ENCODE measurements at regions of chr12 and their contacts with region 1.

Region 1: DNA sequence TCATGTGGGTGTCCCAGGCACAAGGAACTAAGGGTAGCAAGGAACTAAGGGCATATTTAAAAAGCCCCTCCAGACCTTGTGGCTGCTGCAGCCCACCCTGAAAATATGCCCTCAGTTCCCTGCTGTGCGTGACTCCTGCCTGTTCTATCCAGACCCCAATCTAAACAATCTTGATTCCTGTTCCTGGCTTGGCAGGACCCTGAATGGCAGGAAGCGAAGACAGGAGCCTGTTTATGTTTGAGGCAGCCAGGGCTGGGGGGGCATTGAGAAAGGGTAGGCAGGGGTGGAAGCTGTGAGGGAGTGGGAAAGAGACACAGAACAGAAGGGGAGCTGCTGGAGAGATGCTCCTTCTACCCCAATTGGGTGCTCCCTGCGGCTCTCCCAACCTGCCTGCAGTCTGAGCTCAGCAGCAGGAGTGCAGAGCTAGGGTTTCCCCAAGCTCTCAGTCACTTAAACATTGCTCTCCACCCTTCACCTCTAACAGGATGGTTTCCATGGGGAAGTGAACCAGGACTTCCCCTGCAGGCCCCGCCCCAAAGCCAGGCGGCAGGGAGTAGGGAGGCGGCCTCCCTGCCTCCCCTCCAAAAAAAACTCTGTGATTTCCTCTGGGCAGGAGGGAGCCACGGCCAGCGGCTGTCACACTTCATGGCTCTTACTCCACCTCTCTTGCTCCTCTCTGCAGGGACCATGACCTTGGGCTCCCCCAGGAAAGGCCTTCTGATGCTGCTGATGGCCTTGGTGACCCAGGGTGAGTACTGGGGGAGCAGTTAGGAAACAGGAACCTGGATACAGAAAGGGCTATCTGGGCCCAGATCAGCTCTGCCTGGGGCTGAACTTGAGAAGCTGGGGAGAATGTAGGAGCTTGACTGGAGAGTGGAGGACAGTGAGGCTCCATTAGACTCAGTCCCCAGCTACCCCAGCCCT is 4.7 kb downstream of the ACVRL1 start:
- DNase-seq: no peak
- ATAC-seq: peak; percentile 83
- H3K4me3 ChIP-seq: peak overlapping the region; percentile 16 to 19; a peak in 3 of 4 replicates
- H3K27ac ChIP-seq: no peak overlapping the region; the same call in 1 of the 2 replicates
- H3K4me1 ChIP-seq: peaks cover 8 to 21% of the 10 kb centered on the region in 2 experiments
- H3K27me3 ChIP-seq: no peaks in the 10 kb centered on the region
- CTCF ChIP-seq: no peak
- POLR2A ChIP-seq: no peak
- RAD21 ChIP-seq: no peak

Region 2: GRCh38 chr12:51897181-51897580 is 14.9 kb before region 1 on chr12:
- CTCF ChIA-PET with region 1: interaction called, 22 read pairs
- POLR2A ChIA-PET with region 1: no interaction called
- RAD21 ChIA-PET with region 1: no interaction called
- intact Hi-C with region 1: no loop called
- DNase-seq: no peak
- ATAC-seq: no peak
- H3K4me3 ChIP-seq: no peak overlapping the region
- H3K27ac ChIP-seq: no peak overlapping the region
- H3K4me1 ChIP-seq: peaks cover 0 to 8% of the 10 kb centered on the region in 2 experiments; a peak in 2 of 4 replicates
- H3K27me3 ChIP-seq: no peaks in the 10 kb centered on the region
- CTCF ChIP-seq: no peak
- POLR2A ChIP-seq: no peak
- RAD21 ChIP-seq: no peak

Region 3: DNA sequence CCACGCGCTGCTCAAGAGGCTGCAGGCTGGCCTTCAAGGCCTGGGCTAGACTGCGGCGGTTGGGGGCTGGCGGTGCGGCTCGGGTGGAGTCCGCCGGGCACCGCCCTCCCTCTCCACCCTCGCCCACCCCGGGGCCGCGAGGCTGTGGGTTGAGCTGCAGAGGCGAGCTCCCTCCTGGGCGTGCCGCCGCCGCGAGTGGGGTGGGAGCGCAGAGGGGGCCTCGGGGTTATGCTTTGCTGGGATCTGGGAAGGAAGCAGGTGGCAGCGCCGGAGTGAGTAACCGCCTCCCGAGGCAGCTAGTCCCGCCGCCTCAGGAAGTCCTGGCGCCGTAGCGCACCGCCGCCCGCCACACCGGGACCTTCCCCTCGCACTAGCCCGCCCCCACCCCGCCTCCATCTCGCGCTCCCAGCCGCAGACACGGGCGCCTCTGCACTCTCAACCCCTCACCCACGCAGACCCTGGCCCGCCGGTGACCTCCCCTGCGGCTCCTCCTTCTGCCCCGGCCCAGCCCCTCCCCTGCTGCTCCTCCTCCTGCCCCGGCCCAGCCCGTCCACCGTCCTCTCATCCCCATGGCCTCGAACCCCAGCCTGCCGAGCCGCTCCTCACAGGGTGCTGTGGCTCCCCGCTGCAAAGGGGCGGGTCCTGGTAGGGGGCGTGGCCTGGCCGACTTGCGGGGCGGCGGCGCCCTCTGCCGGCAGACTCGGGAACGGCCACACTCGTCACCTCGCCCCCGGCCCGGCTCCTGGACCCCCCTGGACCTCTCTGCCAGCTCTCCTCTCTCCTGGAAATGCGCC is 111.3 kb after region 1 on chr12:
- CTCF ChIA-PET with region 1: no interaction called
- POLR2A ChIA-PET with region 1: no interaction called
- RAD21 ChIA-PET with region 1: no interaction called
- intact Hi-C with region 1: no loop called
- DNase-seq: peak; percentile 62
- ATAC-seq: peak; percentile 71
- H3K4me3 ChIP-seq: peak overlapping the region; percentile 47 to 62
- H3K27ac ChIP-seq: peak overlapping the region; percentile 77
- H3K4me1 ChIP-seq: peaks cover 22 to 61% of the 10 kb centered on the region in 2 experiments
- H3K27me3 ChIP-seq: no peaks in the 10 kb centered on the region
- CTCF ChIP-seq: peak in 2 of 3 experiments; percentile 90; a peak in 4 of 6 replicates
- POLR2A ChIP-seq: no peak
- RAD21 ChIP-seq: no peak